AG04449 (cell line): ENCODE measurements at regions of chr16 and their contacts with region 1.

Region 1: DNA sequence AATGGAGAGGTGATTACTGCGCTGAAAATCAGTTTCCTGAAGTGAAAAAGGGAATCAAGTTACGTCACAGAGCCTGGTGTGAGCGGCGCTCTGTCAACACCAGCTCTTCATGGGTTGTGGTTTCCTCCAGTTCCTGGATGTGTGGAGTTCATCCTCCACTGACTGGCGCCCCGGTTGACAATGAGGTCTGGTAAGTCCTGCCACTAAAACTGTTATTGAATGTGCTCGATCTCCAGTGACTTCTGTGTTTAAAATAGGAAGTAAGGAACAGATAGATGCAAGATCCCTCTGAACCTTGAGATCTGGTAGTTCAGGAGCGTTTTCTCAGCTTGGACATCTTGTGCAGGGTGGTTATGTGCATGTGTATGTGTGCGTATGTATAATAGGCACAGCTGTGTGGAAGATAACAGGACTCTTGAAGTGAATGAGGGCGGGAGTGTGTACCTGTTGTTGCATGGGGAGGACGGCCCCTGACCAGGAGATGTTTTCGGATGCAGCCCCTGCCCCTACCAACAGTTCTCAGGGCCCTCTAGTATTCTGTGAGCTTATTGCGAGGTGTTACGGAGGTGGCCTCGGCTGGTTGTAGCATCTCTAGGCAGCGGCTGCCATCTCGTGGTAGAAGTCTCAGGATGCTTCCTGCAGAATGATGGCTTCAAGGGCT is 22.0 kb upstream of the GOT2 start:
- DNase-seq: no peak
- H3K4me3 ChIP-seq: no peak overlapping the region
- CTCF ChIP-seq: peak; percentile 82

Region 2: GRCh38 chr16:58494981-58495520 is 261.1 kb before region 1 on chr16:
- CTCF ChIA-PET with region 1: interaction called, 10 read pairs
- POLR2A ChIA-PET with region 1: no interaction called
- DNase-seq: peak; percentile 87
- H3K4me3 ChIP-seq: peak overlapping the region; percentile 19
- CTCF ChIP-seq: peak; percentile 83

Region 3: DNA sequence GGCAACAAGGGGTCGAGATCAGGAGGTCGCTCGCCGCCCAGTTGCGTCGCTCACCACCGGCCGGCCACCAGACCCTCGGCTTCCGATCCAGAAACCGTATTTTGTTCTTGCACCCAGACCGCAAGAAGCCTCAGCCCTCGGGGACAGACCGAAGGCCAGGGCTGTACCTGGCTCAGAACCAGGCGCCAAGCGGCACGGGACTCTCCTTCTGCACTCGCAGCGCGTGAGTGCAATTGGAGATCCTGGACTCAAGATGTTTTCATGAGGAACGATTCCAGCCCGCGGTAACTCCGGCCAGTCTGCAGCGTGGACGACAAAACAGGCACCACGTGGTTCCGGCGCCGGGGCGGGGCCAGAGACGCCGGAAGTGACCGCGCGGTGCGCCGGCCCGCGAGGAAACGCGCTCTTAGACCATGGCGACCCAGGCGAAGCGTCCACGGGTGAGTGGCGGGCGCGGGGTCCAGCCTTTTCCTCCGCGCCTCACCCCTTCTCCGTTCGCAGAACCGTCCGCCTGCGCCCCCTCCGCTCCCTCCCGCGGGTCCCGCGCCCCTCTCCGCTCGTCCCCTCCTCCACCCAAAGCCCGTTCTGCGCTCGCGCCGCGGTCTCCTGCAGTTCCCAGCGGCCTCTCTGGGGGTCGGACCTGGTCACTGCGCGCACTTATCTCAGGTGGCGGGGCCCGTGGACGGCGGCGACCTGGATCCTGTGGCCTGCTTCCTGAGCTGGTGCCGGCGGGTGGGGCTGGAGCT is 240.8 kb before region 1 on chr16 and contains the start of gene SETD6:
- CTCF ChIA-PET with region 1: interaction called, 22 read pairs
- POLR2A ChIA-PET with region 1: no interaction called
- DNase-seq: peak; percentile 33
- H3K4me3 ChIP-seq: peak within 1 kb of the TSS; percentile 83
- CTCF ChIP-seq: peak; percentile 19

Region 4: DNA sequence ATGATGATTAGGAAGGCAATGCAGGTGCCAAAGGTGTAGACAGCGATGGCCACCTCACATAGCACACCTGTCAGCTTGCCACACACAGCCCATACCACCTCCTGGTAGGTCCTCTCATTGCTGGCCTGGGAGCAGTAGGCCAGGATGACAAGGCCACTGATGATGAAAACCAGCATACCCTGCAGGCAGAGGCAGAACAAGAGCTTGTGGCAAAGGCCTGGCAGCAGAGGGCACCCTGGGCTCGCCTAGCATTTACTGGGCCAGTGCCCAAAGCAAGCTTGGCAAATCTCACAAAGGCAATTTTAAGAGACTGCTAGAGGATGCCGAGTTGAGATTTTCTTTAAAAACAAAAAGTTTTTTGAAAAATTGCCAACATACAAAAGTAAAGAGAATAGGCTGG is 77.4 kb before region 1 on chr16:
- CTCF ChIA-PET with region 1: interaction called, 31 read pairs
- POLR2A ChIA-PET with region 1: no interaction called
- DNase-seq: no peak
- H3K4me3 ChIP-seq: no peak overlapping the region
- CTCF ChIP-seq: peak; percentile 22

Region 5: GRCh38 chr16:58744497-58744896 is 11.6 kb before region 1 on chr16:
- CTCF ChIA-PET with region 1: interaction called, 26 read pairs
- POLR2A ChIA-PET with region 1: no interaction called
- DNase-seq: no peak
- H3K4me3 ChIP-seq: no peak overlapping the region
- CTCF ChIP-seq: no peak

Region 6: GRCh38 chr16:58773870-58774269 is 17.8 kb after region 1 on chr16:
- CTCF ChIA-PET with region 1: interaction called, 11 read pairs
- POLR2A ChIA-PET with region 1: no interaction called
- DNase-seq: no peak
- H3K4me3 ChIP-seq: no peak overlapping the region
- CTCF ChIP-seq: no peak